ENCODE measurements at regions of chr2 and their contacts with region 1.

Region 1: DNA sequence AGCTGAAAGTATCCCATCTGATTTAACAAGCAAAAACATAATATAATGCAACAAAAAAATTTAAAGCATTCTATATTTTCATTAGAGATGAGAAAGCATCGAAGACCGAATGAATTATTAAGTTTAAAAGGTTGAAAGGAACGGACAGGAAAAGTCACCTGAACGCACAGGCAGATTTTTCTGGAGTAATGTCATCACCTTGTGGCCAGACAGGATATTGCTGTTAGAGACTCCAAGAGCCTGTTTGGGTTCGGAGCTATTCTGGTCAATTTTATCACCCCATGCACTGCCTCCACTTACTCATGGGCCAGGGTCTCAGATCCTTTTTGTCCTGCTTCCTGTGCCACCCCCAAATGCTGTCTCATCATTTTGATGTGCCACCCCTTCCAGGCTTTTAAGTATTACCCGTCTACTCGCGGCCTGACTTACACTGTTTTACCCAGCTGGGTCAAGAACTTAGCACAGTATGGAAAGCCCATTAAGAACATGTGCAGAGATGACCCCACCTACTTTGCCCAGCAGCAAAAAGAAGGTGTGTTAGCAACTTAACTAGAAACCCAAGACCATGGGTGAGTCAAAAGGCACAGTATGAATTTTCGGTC is 27.3 kb downstream of the GKN2 start:
- DNase-seq: no peak
- H3K4me3 ChIP-seq: no peak overlapping the region
- H3K27ac ChIP-seq: no peak overlapping the region
- H3K27me3 ChIP-seq: peaks cover 0 to 9% (median 0%) of the 10 kb centered on the region in 45 donors
- CTCF ChIP-seq: peak; percentile 45 to 90 (median 82)

Region 2: GRCh38 chr2:68467077-68467960 is 458.1 kb before region 1 on chr2 and contains the starts of genes APLF and FBXO48:
- intact Hi-C with region 1: loop called in 1 of 2 experiments (anchors 10 kb)
- DNase-seq: peak; percentile 90 to 98 (median 97)
- H3K4me3 ChIP-seq: peak within 1 kb of the TSS; percentile 69 to 98 (median 89)
- H3K27ac ChIP-seq: peak within 1 kb of the TSS in 55 of 59 donors; percentile 13 to 92 (median 82)
- H3K27me3 ChIP-seq: no peaks in the 10 kb centered on the region
- CTCF ChIP-seq: peak in 20 of 56 donors; percentile 2 to 42 (median 24)
- total RNA-seq, gene APLF: 4.5 to 15.3 (median 9.1) TPM
- total RNA-seq, gene FBXO48: 1.2 to 3.7 (median 2.4) TPM

Region 3: DNA sequence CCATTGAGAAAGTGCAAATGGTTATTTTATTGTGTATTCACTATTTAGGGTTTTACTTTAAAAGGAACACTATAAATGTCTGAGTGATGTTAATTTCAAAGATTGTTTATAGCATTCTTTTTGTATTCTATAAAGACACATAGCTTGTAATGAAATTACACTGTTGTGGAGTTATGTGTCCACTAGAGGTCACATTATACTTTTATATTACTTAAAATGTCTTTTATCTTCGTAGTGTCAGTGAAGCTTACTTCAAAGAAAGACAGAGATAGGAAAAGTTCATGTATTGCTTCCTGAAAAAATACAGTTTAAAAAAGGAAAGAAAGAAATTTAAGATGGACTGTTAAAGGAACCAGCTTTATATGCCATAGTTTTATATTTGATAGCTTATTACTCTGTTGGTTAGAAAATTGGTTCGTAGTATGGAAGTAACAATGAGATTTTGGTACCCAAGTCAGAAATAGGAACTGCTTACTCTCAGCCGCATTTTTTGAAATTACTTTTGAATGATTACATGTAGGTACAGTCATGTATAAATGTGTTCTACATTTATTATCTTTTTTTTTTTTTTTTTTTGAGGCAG is 437.5 kb before region 1 on chr2:
- intact Hi-C with region 1: loop called in 1 of 2 experiments (anchors 10 kb)
- DNase-seq: no peak
- H3K4me3 ChIP-seq: no peak overlapping the region
- H3K27ac ChIP-seq: no peak overlapping the region
- H3K27me3 ChIP-seq: no peaks in the 10 kb centered on the region
- CTCF ChIP-seq: peak in 55 of 56 donors; percentile 35 to 72 (median 53)

Region 4: DNA sequence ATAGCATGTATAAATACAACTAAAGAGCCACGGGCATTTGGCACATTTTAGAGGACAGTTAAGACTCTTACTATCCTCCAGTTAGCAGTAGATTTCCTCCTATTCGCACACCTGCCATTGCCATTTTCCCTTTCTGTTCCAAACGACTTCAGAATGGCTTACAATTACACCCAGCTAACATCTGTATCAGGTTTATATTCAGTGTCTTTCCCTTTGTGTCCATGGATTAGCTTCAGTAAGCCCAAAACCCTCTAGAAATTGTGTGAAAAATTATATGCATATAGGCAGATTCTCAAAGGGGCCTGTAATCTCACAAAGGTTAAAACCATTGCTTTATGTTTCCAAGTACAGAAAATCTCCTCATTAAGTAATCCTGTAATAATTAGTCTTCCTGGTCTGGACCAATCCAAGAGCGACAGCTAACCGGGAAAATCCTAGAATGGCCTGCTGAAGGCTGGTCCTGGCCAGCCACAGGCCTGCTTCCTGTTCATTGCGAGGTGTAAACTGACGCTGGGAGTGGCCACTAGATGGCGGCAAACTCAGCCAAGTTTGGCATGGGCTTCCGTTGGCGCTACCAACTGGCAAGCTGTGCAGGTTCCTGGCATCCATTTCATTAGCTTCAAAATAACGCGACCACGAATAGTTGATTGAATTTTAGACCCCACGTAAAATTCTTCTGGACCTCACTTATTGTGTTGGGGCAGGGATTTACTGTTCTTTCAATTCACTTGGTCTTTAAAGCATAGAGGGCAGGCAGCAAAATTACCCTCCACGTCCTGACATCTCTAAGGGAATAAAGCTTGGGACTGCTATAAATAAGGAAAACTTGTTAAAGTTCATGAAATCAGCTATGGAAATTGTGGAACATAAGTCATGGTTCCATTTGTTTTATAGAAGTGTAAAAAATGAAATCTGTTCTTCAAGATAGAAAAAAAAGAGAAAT is 173.7 kb before region 1 on chr2:
- intact Hi-C with region 1: loop called (anchors 5 kb)
- DNase-seq: peak; percentile 67 to 93 (median 88)
- H3K4me3 ChIP-seq: peak overlapping the region in 19 of 59 donors; percentile 2 to 40 (median 26)
- H3K27ac ChIP-seq: peak overlapping the region in 4 of 59 donors; percentile 5 to 32 (median 21)
- H3K27me3 ChIP-seq: no peaks in the 10 kb centered on the region
- CTCF ChIP-seq: peak; percentile 62 to 99 (median 96)

Region 5: DNA sequence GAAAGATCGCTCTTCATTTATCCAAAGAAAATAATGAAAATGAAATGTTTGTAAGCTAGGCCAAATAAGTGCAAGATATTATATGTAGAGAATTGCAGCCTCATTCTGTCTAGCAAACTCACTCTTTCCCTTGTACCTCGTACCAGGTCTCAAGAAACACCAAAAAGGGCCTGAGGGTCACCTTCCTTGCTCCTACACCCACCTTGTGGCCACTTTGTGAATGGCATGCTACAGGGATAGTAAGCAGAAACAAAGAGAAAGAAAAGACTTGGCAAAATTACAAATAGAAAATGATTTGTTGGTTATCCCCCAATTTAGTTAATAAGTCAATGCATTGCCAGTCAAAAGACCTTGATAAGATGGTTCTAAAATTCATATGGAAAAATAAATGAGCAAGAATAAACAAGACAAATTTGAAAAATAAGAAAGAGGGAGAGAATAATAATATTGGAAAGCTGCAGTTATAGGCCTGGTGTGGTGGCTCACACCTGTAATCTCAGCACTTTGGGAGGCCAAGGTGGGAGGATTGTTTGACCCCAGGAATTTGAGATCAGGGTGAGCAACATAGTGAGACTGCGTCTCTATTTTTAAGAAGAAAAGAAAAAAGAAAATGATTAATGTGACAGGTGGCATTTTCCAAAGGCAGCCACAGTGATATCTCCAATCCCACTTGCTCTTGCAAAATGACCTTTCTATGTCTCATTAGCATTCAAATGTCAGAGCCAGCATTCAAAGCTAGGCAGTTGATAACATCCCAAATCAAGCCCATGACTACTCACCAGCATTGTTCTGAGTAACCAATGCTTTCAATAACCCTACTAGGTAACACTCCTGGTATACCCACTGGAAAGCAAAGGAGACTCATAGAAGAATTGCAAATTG is 15.4 kb before region 1 on chr2:
- intact Hi-C with region 1: no loop called
- DNase-seq: peak in 9 of 10 donors; percentile 13 to 72 (median 55)
- H3K4me3 ChIP-seq: no peak overlapping the region
- H3K27ac ChIP-seq: no peak overlapping the region
- H3K27me3 ChIP-seq: no peaks in the 10 kb centered on the region
- CTCF ChIP-seq: peak; percentile 77 to 98 (median 92)

Region 6: DNA sequence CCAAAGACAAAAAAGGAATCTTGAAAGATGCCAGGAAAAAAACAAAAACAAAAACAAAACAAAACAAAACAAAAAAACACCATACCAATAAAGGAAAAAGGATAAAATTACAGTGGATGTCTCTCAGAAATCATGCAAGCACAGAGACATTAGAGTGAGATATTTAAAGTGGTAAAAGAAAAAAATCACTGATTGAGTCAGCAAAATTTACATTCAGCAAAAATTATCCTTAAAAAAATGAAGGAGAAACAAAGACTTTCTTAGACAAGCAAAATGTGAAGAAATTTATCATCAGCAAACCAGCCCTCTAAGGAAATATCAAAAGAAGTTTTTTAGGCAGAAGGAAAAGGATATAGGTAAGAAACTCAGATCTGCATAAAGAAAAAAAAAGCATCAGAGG is 38.9 kb after region 1 on chr2:
- intact Hi-C with region 1: loop called in 1 of 2 experiments (anchors 2 kb)
- DNase-seq: no peak
- H3K4me3 ChIP-seq: no peak overlapping the region
- H3K27ac ChIP-seq: no peak overlapping the region
- H3K27me3 ChIP-seq: peaks cover 0 to 3% (median 0%) of the 10 kb centered on the region in 45 donors
- CTCF ChIP-seq: no peak

Measured in dorsolateral prefrontal cortex (tissue), 120 donors.